ENCODE measurements at regions of chr2 and their contacts with region 1.

Region 1: DNA sequence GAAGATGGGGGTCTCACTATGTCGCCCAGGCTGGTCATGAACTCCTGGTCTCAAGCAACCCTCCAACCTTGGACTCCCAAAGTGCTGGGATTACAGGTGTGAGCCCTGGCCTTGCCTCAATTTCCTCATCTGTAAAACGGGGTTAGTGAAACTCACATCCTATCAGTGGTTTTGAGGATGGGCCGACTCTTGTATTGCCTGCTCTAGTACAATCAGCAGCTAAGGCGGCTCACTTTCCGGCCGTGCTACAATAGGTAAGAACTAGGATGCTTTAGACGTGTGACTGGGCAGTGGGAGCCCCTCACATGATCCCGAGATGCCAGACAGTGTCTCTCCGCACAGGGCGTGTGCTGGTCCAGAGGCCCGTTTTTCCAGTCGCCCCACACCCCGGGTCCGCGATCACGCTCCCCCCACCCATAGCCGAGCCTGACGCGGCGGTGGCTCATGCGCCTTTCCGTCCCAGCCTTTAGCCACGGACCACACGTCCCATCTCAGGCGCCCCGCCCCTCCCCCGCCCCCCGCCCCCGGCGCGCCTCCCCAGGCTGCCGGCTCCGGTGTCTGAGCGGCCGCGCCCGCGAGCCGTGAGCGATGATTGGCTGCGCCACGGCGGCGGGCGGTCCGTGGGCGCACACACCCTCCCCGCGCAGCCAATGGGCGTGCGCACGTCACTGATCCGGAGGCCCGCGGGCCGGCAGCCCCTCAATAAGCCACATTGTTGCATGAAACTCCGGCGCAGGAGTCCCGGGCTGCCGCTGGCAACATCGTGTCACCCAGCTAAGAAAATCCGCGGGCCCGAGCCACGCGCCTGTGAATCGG is at the start of gene HK2:
- DNase-seq: peak; percentile 89
- H3K4me3 Mint-ChIP-seq: peak within 1 kb of the TSS; percentile 84
- H3K27ac Mint-ChIP-seq: peak within 1 kb of the TSS; percentile 87
- H3K4me1 Mint-ChIP-seq: peaks cover 47% of the 10 kb centered on the region
- H3K27me3 Mint-ChIP-seq: no peaks in the 10 kb centered on the region
- CTCF ChIP-seq: no peak
- total RNA-seq, gene HK2: 56.5 and 79.4 TPM in 2 replicates

Region 2: GRCh38 chr2:74690571-74690970 is 143.1 kb before region 1 on chr2:
- CTCF ChIA-PET with region 1: interaction called, 3 read pairs
- intact Hi-C with region 1: loop called (anchors 5 kb)
- DNase-seq: peak; percentile 59
- H3K4me3 Mint-ChIP-seq: no peak overlapping the region
- H3K27ac Mint-ChIP-seq: no peak overlapping the region
- H3K4me1 Mint-ChIP-seq: peaks cover 31% of the 10 kb centered on the region
- H3K27me3 Mint-ChIP-seq: no peaks in the 10 kb centered on the region
- CTCF ChIP-seq: peak; percentile 68

Region 3: DNA sequence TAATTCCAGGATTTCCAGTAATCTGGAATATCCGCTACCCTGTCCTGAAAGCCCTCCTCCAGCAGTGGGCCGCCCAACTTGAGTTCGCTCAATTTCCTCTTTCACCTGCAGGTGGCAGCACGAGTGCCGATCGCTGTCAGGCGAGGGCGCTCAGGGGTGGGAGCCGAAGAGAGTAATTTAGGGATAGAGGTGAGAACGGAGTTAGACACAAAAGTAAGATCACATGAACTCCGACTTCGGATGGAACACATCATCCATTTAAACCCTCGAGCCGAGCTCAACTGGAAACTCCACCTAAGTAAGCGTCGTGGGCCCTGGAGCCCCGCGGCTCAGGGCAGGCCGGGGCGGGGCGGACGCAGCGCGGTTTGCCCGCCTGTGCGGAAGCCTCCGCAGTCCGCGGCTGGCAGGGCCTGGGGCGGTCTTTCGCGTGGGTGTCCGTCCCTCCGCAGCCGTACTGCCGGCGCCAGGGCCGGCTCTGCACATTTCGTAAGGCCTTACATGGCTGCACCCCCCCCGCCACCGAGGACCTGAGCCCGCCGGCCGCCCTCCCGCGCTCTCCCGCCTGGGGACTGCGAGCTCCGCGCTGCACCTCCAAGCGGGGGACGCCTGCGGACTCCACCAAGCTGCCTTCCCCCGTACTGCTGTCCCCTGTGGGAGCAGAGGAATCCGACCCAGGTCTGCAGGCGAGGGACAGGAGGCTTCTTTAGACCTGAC is 118.4 kb before region 1 on chr2:
- CTCF ChIA-PET with region 1: interaction called, 38 read pairs
- intact Hi-C with region 1: loop called (anchors 1 kb)
- DNase-seq: peak; percentile 91
- H3K4me3 Mint-ChIP-seq: peak overlapping the region; percentile 75
- H3K27ac Mint-ChIP-seq: peak overlapping the region; percentile 66
- H3K4me1 Mint-ChIP-seq: no peaks in the 10 kb centered on the region
- H3K27me3 Mint-ChIP-seq: no peaks in the 10 kb centered on the region
- CTCF ChIP-seq: peak; percentile 82

Region 4: GRCh38 chr2:74845217-74846011 is 11.8 kb after region 1 on chr2:
- CTCF ChIA-PET with region 1: interaction called, 10 read pairs
- intact Hi-C with region 1: no loop called
- DNase-seq: peak; percentile 93
- H3K4me3 Mint-ChIP-seq: peak overlapping the region; percentile 37
- H3K27ac Mint-ChIP-seq: peak overlapping the region; percentile 79
- H3K4me1 Mint-ChIP-seq: peaks cover 92% of the 10 kb centered on the region
- H3K27me3 Mint-ChIP-seq: no peaks in the 10 kb centered on the region
- CTCF ChIP-seq: no peak

Region 5: GRCh38 chr2:74864846-74865722 is 31.5 kb after region 1 on chr2:
- CTCF ChIA-PET with region 1: interaction called, 4 read pairs
- intact Hi-C with region 1: loop called (anchors 2 kb)
- DNase-seq: peak; percentile 48
- H3K4me3 Mint-ChIP-seq: peak overlapping the region; percentile 5
- H3K27ac Mint-ChIP-seq: peak overlapping the region; percentile 56
- H3K4me1 Mint-ChIP-seq: peaks cover 62% of the 10 kb centered on the region
- H3K27me3 Mint-ChIP-seq: no peaks in the 10 kb centered on the region
- CTCF ChIP-seq: no peak

Region 6: DNA sequence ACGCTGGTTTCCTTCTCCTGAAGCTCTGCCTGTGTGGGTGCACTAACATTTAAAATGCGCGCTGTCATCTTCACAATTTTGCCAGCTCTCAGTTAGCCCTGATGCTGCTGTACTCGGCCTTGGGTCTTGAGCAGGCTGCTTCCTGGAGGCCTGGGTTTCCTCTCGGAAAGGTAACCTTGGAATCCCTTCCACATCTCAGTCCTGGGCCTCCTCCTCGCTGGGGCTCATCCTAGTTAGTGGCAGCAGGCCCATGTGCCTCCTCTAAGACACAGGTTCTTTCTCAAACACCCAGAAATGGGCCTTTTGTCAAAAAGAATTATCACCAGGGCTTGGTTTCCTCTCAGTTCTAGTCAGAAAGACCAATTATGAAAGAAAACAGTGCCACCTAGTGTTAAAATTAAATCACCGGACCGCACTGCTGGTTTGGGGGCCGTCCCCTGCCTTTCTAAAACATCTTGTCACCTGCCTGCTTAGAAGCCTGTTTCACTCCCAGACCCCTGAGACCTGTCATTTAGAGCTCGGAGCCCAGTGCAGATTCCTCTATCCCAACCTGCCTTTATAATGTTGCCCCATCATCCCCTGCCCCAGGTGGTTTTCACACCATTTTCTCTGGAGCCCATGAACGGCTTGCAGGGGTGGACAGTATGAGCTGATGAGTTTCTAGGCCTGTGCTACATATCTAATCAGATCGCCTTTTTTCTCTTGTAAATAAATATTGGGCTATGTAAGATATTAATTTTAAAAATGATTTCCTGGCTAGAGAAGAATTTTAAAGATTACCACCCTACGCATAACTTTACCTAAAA is 42.7 kb after region 1 on chr2:
- CTCF ChIA-PET with region 1: interaction called, 8 read pairs
- intact Hi-C with region 1: loop called (anchors 1 kb)
- DNase-seq: peak; percentile 51
- H3K4me3 Mint-ChIP-seq: no peak overlapping the region
- H3K27ac Mint-ChIP-seq: no peak overlapping the region
- H3K4me1 Mint-ChIP-seq: peaks cover 24% of the 10 kb centered on the region
- H3K27me3 Mint-ChIP-seq: no peaks in the 10 kb centered on the region
- CTCF ChIP-seq: peak; percentile 66

Measured in Calu3 (cell line).